ENCODE measurements at regions of chr2 and their contacts with region 1.

Region 1: GRCh38 chr2:10408649-10409579 is 39.2 kb downstream of the ODC1 start:
- DNase-seq: peak; percentile 88 to 91 (median 90)
- ATAC-seq: peak; percentile 82 to 91 (median 84)
- H3K4me3 ChIP-seq: peak overlapping the region in 2 of 3 donors; percentile 16 to 27
- H3K27ac ChIP-seq: peak overlapping the region; percentile 56 to 77 (median 69)
- H3K4me1 ChIP-seq: peaks cover 0 to 61% (median 14%) of the 10 kb centered on the region in 4 donors
- H3K27me3 ChIP-seq: no peaks in the 10 kb centered on the region
- CTCF ChIP-seq: peak; percentile 97 to 99 (median 98)
- POLR2A ChIP-seq: peak; percentile 26

Region 2: DNA sequence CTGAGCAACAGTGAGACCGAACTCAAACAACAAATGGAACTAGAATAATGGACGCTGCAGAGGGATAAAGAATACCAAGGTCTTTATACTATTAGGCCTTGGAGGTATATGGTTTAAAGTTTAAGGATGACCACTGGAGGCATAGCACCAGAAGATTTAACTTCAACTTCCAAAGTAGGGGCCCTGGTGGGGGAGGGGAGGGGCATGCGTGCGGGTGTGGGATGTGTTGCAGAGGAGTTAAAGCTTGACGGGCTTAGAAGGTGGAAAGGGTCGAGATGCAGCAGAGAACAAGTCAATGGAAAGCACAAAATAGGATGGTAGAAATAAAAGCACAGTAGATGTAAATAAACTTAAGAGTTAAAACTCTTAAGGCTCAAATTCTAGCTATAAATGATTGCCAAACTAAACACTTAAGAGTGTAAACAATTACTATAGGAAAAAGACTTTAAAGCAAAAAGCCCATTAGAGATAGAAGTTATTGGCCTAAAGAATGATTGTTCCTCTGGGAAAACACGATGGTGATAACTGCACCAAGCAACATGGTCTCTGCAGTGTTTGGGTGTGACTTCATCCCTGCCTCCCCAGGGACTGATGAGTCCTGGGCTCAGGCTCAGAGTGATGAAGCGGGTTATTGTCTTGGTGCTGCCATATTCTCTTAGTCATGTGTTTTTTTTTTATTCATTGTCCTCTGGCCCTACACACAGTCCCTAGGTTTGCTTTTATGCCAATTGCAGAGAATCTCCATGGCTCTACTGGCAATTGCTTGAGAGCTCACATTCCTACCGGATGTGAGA is 273.4 kb before region 1 on chr2:
- intact Hi-C with region 1: loop called in 1 of 2 experiments (anchors 5 kb)
- DNase-seq: no peak
- ATAC-seq: no peak
- H3K4me3 ChIP-seq: no peak overlapping the region
- H3K27ac ChIP-seq: no peak overlapping the region
- H3K4me1 ChIP-seq: peaks cover 0 to 11% (median 0%) of the 10 kb centered on the region in 4 donors
- H3K27me3 ChIP-seq: no peaks in the 10 kb centered on the region
- CTCF ChIP-seq: no peak
- POLR2A ChIP-seq: no peak

Region 3: GRCh38 chr2:10302479-10303180 is 106.3 kb before region 1 on chr2 and contains the start of gene HPCAL1:
- intact Hi-C with region 1: loop called in 1 of 2 experiments (anchors 5 kb)
- DNase-seq: peak; percentile 97 to 99 (median 98)
- ATAC-seq: peak; percentile 76 to 93 (median 86)
- H3K4me3 ChIP-seq: peak within 1 kb of the TSS; percentile 77 to 90 (median 90)
- H3K27ac ChIP-seq: peak within 1 kb of the TSS; percentile 88 to 93 (median 93)
- H3K4me1 ChIP-seq: peaks cover 0 to 34% (median 10%) of the 10 kb centered on the region in 4 donors
- H3K27me3 ChIP-seq: no peaks in the 10 kb centered on the region
- CTCF ChIP-seq: peak; percentile 47 to 62 (median 52)
- POLR2A ChIP-seq: peak; percentile 98
- total RNA-seq, gene HPCAL1: 23.1 to 68.8 (median 29.1) TPM

Region 4: DNA sequence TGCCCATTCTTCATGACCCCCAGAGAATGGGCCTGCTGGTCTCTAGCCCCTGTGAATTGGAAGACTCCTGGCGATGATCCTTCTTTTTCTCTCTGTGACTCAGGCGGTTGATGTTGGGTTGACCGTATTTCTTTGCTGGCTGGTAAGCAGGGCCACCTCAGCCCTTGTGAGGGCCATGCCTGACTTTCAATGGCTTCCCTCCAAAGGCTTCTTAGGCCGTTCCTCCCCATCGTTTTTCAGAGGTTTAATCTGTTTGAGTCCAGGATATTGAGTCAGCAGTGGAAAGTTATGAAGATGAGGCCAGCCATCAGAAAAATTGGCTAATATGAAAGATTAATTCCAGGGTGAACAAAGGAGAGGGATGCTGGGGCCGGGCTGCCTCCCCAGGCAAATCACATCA is 92.6 kb before region 1 on chr2:
- intact Hi-C with region 1: loop called in 1 of 2 experiments (anchors 10 kb)
- DNase-seq: no peak
- ATAC-seq: no peak
- H3K4me3 ChIP-seq: no peak overlapping the region
- H3K27ac ChIP-seq: no peak overlapping the region
- H3K4me1 ChIP-seq: no peaks in the 10 kb centered on the region
- H3K27me3 ChIP-seq: no peaks in the 10 kb centered on the region
- CTCF ChIP-seq: no peak
- POLR2A ChIP-seq: no peak

Region 5: DNA sequence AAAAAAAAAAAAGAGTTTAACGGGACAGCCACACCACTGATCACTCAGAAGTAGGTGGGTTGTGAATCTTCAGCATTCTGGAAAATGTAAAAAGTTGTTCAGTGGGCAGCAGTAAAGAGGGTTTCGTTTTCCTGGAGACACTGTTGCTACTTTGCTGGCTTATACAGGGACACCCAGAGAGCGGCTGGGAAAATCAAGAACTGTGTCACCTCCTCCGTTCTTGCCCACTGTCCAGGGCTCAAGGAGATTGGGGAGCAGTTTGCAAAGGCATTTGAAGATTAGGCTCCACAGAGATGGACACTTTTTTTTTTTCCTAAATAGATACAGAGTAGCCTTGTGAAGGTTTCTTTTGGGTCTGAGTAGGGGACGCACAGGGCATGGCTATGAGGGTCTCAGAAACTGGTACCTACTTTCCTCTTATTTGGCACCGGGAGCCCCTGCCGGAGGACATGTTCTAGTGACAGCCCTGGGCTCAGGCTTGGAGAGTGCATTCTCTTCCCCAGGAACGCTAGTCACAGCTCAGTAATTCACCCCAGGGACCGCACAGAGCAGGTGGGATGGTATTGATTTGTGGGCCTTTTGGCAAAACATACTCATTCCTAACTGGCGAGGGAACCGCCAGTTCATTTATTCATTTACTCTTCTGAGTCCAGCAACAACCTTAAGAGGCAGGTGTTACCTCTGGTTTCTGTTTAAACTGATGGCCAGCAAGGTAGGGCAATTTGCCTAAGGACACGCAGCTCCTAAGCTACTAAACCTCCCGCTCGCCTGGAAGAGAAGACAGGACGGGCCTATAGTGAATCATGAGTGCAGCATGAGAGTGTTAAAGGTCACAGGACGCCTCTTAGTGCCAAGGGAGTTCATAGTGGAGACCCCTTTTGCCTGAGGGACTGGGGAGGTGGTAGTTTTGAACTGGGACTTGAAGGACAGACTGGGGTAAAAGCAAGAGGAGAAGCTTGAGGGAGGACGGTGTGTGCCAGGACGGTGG is 53.1 kb before region 1 on chr2:
- intact Hi-C with region 1: no loop called
- DNase-seq: no peak
- ATAC-seq: peak in 3 of 4 donors; percentile 7 to 48 (median 29)
- H3K4me3 ChIP-seq: no peak overlapping the region
- H3K27ac ChIP-seq: no peak overlapping the region
- H3K4me1 ChIP-seq: no peaks in the 10 kb centered on the region
- H3K27me3 ChIP-seq: no peaks in the 10 kb centered on the region
- CTCF ChIP-seq: no peak
- POLR2A ChIP-seq: no peak

Region 6: DNA sequence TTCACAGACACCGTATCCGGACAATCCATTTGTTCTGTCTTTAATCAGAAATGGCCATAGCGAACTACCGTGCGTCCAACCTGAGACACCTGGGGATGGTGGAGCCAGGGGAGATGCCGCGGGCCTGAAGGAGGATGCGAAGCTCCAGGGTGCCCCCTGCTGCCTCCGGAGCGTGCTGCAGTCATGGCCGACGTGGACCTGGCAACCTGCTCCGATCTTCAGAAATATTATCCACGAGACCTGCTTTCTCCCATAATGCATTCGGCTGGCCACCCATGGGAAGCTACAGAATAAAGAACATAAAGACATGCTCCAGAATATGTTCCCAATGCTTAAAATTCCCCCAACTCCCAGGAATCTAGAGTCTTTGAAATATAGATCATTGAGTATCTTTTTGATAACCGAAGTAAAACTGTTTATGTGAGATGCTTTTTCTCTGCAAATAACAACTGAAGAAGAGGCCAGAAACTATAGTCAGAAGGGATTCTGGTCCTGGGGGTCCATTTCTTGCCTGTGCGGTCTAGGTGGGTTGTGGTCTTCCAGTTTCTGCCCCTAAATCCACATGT is 715.7 kb after region 1 on chr2:
- intact Hi-C with region 1: no loop called
- DNase-seq: peak; percentile 64 to 68 (median 65)
- ATAC-seq: peak; percentile 84 to 92 (median 90)
- H3K4me3 ChIP-seq: no peak overlapping the region
- H3K27ac ChIP-seq: no peak overlapping the region
- H3K4me1 ChIP-seq: peaks cover 0 to 2% (median 0%) of the 10 kb centered on the region in 4 donors
- H3K27me3 ChIP-seq: no peaks in the 10 kb centered on the region
- CTCF ChIP-seq: peak; percentile 70 to 83 (median 80)
- POLR2A ChIP-seq: no peak